Activated naive CD4-positive, alpha-beta T cell treated with anti-CD3 and anti-CD28 coated beads for 36 hours (primary cell): ENCODE measurements at regions of chr2 and their contacts with region 1.

Region 1: DNA sequence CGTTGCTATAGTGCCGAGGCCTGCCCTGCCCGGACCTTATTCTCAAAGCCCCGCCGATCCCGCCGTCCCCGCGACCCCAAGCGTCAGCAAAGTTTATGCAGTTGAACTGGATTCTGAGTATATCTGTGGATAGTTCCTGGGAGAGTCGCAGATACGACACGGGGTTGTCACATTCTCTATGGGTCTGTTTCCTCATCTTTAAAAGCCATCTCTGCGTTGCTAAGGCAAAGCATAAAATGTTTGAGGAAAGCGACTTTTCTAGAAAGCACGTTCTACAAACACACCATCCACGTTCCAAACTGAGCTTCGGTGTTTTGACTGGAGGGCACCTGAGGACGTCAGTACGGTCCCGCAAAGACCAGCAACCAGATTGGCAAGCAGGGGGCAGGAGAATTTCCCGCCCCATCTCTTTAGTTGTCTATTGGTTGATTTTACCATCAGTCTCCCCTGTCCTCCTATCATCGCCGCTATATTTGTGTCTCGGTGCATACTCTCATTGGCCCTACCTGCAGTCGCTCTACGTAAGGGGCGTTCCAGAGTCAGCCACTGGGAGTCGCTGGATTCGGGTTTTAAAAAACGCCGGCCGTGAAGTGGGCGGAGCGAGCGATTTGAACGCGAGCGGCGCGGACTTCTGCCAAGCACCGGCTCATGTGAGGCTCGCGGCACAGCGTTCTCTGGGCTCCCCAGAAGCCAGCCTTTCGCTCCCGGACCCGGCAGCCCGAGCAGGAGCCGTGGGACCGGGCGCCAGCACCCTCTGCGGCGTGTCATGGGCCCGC is at the start of gene CENPA:
- DNase-seq: peak; percentile 98
- H3K4me3 Mint-ChIP-seq: peak within 1 kb of the TSS; percentile 72
- H3K27ac Mint-ChIP-seq: peak within 1 kb of the TSS; percentile 15
- H3K4me1 Mint-ChIP-seq: peaks cover 10% of the 10 kb centered on the region
- H3K27me3 Mint-ChIP-seq: peaks cover 20% of the 10 kb centered on the region
- total RNA-seq, gene CENPA: 42.9 to 43.6 TPM

Region 2: DNA sequence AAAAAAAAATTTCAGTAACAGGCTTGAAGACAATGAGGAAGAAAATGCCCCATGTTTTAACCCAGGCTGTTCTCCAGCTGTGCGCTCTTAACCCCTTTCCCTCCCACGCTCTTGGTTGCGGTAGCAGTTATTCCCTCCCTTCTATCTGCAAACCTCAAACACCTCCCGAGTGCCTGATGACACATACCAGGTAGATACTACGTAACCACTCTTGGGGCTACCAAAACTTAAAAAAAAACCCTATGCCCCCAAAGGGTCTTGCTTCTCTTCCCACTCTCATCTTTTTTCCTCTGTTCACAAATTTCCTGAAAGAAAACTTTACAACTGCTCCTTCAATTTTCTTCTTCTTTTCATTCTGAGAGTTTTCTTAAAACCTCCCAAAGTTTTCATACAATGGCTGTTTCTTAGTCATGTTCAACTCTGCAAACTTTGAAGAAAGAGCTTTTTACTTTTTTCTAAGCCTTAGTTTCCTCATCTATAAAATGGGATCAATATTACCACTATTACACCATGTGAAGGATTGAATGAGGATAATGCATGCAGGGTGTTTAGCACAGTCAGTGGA is 388.8 kb before region 1 on chr2:
- CTCF ChIA-PET with region 1: no interaction called
- intact Hi-C with region 1: no loop called
- DNase-seq: peak; percentile 69
- H3K4me3 Mint-ChIP-seq: no peak overlapping the region
- H3K27ac Mint-ChIP-seq: peak overlapping the region; percentile 4
- H3K4me1 Mint-ChIP-seq: peaks cover 19% of the 10 kb centered on the region
- H3K27me3 Mint-ChIP-seq: no peaks in the 10 kb centered on the region

Region 3: GRCh38 chr2:26764078-26764887 is 21.3 kb before region 1 on chr2 and contains the start of gene SLC35F6:
- CTCF ChIA-PET with region 1: no interaction called
- intact Hi-C with region 1: loop called (anchors 1 kb)
- DNase-seq: peak; percentile 81
- H3K4me3 Mint-ChIP-seq: peak within 1 kb of the TSS; percentile 91
- H3K27ac Mint-ChIP-seq: peak within 1 kb of the TSS; percentile 81
- H3K4me1 Mint-ChIP-seq: peaks cover 44% of the 10 kb centered on the region
- H3K27me3 Mint-ChIP-seq: no peaks in the 10 kb centered on the region
- total RNA-seq, gene SLC35F6: 2.0 to 2.7 TPM

Region 4: GRCh38 chr2:26770986-26771602 is 14.5 kb before region 1 on chr2:
- CTCF ChIA-PET with region 1: interaction called, 3 read pairs
- intact Hi-C with region 1: loop called (anchors 1 kb)
- DNase-seq: peak; percentile 64
- H3K4me3 Mint-ChIP-seq: no peak overlapping the region
- H3K27ac Mint-ChIP-seq: no peak overlapping the region
- H3K4me1 Mint-ChIP-seq: peaks cover 51% of the 10 kb centered on the region
- H3K27me3 Mint-ChIP-seq: no peaks in the 10 kb centered on the region

Region 5: DNA sequence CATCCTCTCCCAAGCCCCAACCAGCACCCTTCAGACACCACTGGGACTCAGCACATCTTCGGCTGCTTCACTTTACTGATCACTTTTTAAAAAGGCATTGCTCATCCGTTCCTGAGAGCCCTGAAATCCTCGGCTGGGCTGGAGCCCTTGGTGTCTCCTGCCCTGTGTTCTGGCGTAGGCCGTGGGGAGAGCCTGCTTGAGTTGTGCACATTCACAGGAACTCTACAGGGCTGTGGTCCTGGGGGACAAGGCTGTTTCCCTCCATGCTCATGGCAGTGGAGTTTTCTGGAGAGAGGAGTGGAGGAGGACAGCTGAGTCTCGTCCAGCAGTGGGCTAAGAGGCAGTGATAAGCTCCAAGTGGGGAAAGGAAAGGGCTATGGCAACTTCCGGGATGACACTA is 16.2 kb after region 1 on chr2:
- CTCF ChIA-PET with region 1: no interaction called
- intact Hi-C with region 1: no loop called
- DNase-seq: no peak
- H3K4me3 Mint-ChIP-seq: no peak overlapping the region
- H3K27ac Mint-ChIP-seq: no peak overlapping the region
- H3K4me1 Mint-ChIP-seq: peaks cover 2% of the 10 kb centered on the region
- H3K27me3 Mint-ChIP-seq: no peaks in the 10 kb centered on the region

Region 6: GRCh38 chr2:27032495-27033252 is 247.1 kb after region 1 on chr2 and contains the start of gene TMEM214:
- CTCF ChIA-PET with region 1: no interaction called
- intact Hi-C with region 1: loop called (anchors 2 kb)
- DNase-seq: peak; percentile 83
- H3K4me3 Mint-ChIP-seq: peak within 1 kb of the TSS; percentile 94
- H3K27ac Mint-ChIP-seq: peak within 1 kb of the TSS; percentile 77
- H3K4me1 Mint-ChIP-seq: peaks cover 35% of the 10 kb centered on the region
- H3K27me3 Mint-ChIP-seq: no peaks in the 10 kb centered on the region
- total RNA-seq, gene TMEM214: 38.3 to 41.3 TPM